ENCODE measurements at regions of chr2 and their contacts with region 1.

Region 1: DNA sequence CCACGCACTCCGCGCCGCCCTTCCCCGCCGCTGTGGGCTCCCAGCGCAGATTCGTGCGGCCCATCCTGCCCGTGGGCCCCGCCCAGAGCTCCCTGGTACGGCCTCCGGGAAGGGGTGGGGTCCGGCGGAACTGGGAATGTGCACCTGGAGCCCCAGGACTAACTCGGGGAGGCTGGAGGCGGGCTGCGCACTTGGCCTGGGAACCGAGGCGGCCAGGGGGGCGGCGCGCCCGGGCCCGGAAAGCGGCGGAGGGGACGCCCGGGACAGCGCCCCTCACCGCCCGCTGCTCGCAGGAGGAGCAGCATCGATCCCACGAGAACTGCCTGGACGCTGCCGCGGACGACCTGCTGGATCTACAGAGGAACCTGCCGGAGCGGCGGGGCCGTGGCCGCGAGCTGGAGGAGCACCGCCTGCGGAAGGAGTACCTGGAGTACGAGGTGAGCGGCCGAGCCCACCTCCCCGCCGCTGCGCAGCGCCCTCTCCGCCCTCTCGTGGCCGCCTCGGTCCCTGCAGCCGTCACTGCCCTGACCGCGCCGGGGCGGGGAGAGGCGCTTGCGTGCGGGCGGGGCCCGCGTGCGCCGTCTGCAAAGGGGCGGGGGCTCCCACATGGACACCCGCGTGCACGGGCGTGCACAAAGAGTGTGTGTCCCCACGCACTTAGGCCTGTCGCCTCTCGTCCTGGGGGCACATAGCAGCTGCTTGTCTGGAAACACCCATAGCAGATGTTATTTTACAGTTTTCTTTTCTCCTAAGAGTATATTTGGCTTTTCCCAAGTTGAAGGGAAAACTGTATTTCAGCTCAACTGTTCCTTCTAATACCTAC is 25.2 kb downstream of the PSD4 start:
- DNase-seq: peak; percentile 61 to 90
- ATAC-seq: peak; percentile 81 to 90
- H3K4me3 ChIP-seq: peak overlapping the region; percentile 73
- H3K27ac ChIP-seq: peak overlapping the region; percentile 92 to 97
- H3K4me1 ChIP-seq: peaks cover 48% of the 10 kb centered on the region
- CTCF ChIP-seq: peak; percentile 96
- EP300 ChIP-seq: no peak
- POLR2A ChIP-seq: peak; percentile 62
- RAD21 ChIP-seq: peak; percentile 56 to 80; a peak in 4 of 5 replicates

Region 2: DNA sequence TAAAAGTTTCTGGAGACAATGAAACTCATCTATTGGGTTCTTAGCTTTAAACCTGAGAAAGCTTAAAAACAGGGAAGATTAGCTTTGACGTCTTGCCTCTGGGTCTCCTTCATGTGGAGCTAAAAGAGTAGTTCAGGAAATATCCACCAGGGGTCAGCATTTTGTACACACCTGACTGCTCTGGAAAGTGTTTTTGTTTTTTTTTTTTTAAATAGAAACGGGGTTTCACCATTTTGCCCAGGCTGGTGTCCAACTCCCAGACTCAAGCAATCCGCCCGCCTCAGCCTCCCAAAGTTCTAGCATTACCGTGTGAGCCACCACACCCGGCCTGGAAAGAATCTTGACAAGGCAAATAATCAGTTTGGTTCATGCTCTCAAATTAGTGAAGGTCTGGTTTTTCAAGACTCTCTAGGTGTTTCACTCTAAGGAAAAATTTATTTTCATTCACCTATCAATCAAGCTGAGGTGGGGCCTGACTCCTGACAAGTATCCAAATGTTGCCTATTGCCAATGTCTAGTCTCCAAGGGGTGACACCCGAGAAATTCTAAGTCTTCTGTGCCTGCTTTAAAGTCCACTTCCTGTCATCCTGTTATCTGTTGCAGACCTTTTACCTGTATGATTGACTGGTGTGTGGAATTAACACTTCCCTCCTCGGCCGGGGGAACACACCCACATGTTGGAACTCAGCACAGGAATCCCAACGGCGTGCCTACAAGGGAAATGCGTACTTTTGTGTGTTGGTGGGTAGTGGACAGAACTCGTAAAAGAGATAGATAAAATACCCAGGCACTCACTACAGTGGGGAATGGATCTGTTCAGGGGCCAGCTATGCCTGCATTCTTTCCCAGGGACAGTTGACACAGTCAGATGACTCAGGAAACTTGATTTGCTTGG is 60.3 kb before region 1 on chr2:
- CTCF ChIA-PET with region 1: interaction called, 243 read pairs
- POLR2A ChIA-PET with region 1: interaction called, 13 read pairs
- DNase-seq: peak; percentile 52 to 76
- ATAC-seq: peak; percentile 65 to 88; a peak in 5 of 6 replicates
- H3K4me3 ChIP-seq: no peak overlapping the region
- H3K27ac ChIP-seq: peak overlapping the region; percentile 44 to 66; a peak in 5 of 6 replicates
- H3K4me1 ChIP-seq: 0 out of 3 replicates have a peak, but pooled peaks cover 4% of the 10 kb centered on the region
- CTCF ChIP-seq: peak; percentile 87
- EP300 ChIP-seq: no peak
- POLR2A ChIP-seq: no peak
- RAD21 ChIP-seq: peak; percentile 69 to 74

Region 3: GRCh38 chr2:113173542-113174395 is 25.2 kb before region 1 on chr2 and contains the start of gene PSD4:
- CTCF ChIA-PET with region 1: interaction called, 41 read pairs
- POLR2A ChIA-PET with region 1: no interaction called
- DNase-seq: no peak
- ATAC-seq: no peak
- H3K4me3 ChIP-seq: no peak within 1 kb of the TSS
- H3K27ac ChIP-seq: no peak within 1 kb of the TSS
- H3K4me1 ChIP-seq: no peaks in the 10 kb centered on the region
- CTCF ChIP-seq: no peak
- EP300 ChIP-seq: no peak
- POLR2A ChIP-seq: no peak
- RAD21 ChIP-seq: no peak
- polyA plus RNA-seq, gene PSD4: 5.4 and 6.7 TPM in 2 replicates

Region 4: DNA sequence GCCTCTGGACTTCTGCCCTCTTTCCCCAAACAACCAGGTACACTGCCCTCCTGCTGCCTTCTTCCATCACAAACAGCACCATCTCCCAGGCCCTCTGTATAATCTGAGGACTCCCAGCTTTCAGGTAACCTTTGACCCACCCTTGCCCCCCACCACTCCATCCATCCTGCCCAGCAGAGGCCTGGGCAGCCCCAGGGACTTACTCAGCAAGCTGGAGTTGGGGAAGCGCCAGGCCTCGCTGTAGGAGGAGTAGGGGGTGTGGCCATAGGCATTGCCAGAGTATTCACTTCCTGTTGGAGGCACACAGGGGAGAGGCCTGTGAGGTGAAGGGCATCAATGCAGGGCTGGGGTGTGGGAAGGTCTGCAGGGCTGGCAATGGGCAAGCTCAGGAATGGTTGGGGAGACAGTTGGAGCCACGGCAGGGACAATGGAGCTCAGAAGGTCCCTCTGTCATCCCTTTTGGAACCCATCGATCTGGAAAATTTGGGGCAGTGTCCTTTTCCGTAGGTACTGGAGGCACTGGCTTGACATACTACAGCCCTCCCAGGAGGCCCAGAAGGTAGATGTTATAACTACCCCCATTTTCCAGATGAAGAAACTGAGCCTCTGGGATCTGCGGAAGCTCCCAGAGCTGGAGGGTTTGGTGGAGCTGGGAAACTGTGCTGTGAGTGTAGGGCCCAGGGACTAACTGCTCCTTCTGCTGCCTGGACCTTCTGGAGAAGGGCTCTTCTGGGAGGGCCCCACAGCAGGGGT is 21.1 kb after region 1 on chr2:
- CTCF ChIA-PET with region 1: interaction called, 28 read pairs
- POLR2A ChIA-PET with region 1: interaction called, 4 read pairs
- DNase-seq: peak; percentile 64 to 92
- ATAC-seq: peak; percentile 54 to 73
- H3K4me3 ChIP-seq: peak overlapping the region; percentile 31
- H3K27ac ChIP-seq: peak overlapping the region; percentile 96
- H3K4me1 ChIP-seq: peaks cover 67% of the 10 kb centered on the region
- CTCF ChIP-seq: no peak
- EP300 ChIP-seq: no peak
- POLR2A ChIP-seq: peak; percentile 62
- RAD21 ChIP-seq: no peak

Region 5: GRCh38 chr2:113240150-113240862 is 41.3 kb after region 1 on chr2:
- CTCF ChIA-PET with region 1: interaction called, 118 read pairs
- POLR2A ChIA-PET with region 1: interaction called, 13 read pairs
- DNase-seq: peak; percentile 74 to 87
- ATAC-seq: peak; percentile 69
- H3K4me3 ChIP-seq: 0 out of 3 replicates have a peak overlapping the region, but pooled peaks have one; percentile 1
- H3K27ac ChIP-seq: peak overlapping the region; percentile 97 to 98
- H3K4me1 ChIP-seq: peaks cover 50% of the 10 kb centered on the region
- CTCF ChIP-seq: no peak
- EP300 ChIP-seq: peak; percentile 14 to 49; a peak in 3 of 5 replicates
- POLR2A ChIP-seq: no peak; the same call in 1 of the 2 replicates
- RAD21 ChIP-seq: no peak

Region 6: GRCh38 chr2:113324684-113325160 is 125.7 kb after region 1 on chr2:
- CTCF ChIA-PET with region 1: interaction called, 14 read pairs
- POLR2A ChIA-PET with region 1: no interaction called
- DNase-seq: peak; percentile 80 to 85
- ATAC-seq: peak; percentile 67 to 78
- H3K4me3 ChIP-seq: peak overlapping the region; percentile 60
- H3K27ac ChIP-seq: peak overlapping the region; percentile 89 to 92
- H3K4me1 ChIP-seq: peaks cover 51% of the 10 kb centered on the region
- CTCF ChIP-seq: no peak; the same call in 2 of the 3 replicates
- EP300 ChIP-seq: no peak
- POLR2A ChIP-seq: peak; percentile 33
- RAD21 ChIP-seq: no peak

Region 7: DNA sequence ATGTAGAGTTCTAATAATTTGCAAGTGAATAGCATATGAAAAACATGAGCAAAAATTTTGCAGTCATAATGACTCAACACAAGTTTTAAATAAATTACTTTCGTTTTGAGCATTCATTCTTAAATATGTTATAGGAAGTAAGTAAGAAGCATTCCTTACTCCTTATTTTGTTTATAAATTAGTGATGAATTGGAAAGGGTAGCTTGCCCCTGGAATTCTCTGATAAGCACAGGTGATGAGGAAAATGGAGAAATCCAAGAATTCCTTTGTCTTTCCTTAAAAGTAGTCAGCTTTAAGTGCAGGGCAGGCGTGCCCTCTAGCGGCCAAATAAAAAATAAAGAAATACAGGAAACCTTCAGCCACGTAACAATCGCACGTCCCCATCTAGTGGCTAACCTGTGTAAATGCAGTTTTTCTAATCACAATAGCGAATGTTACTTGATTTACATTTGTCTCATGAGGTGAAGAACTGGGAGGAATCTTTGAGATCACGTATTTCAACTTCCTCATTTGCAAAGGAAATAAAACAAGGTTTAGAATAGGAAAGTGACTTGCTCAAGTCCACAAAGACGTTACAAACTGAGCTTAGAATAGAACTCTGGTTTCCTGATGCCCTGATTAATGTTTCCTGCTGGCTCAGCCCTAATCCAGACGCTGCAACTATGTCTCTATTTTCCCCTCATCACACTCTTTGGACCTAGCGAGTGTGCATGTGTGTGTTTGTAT is 191.3 kb after region 1 on chr2:
- CTCF ChIA-PET with region 1: interaction called, 67 read pairs
- POLR2A ChIA-PET with region 1: no interaction called
- DNase-seq: peak; percentile 14 to 85
- ATAC-seq: peak; percentile 77 to 89
- H3K4me3 ChIP-seq: no peak overlapping the region
- H3K27ac ChIP-seq: peak overlapping the region; percentile 12 to 59; a peak in 4 of 6 replicates
- H3K4me1 ChIP-seq: peaks cover 6% of the 10 kb centered on the region; the same call in 2 of the 3 replicates
- CTCF ChIP-seq: peak; percentile 95
- EP300 ChIP-seq: no peak
- POLR2A ChIP-seq: no peak
- RAD21 ChIP-seq: peak; percentile 74 to 82